ENCODE measurements at regions of chr19 and their contacts with region 1.

Region 1: GRCh38 chr19:28537079-28537478 is 675.9 kb downstream of the UQCRFS1 start:
- DNase-seq: no peak
- H3K4me3 Mint-ChIP-seq: no peak overlapping the region
- H3K27ac Mint-ChIP-seq: no peak overlapping the region
- H3K4me1 Mint-ChIP-seq: no peaks in the 10 kb centered on the region
- H3K27me3 Mint-ChIP-seq: no peaks in the 10 kb centered on the region
- CTCF ChIP-seq: no peak

Region 2: DNA sequence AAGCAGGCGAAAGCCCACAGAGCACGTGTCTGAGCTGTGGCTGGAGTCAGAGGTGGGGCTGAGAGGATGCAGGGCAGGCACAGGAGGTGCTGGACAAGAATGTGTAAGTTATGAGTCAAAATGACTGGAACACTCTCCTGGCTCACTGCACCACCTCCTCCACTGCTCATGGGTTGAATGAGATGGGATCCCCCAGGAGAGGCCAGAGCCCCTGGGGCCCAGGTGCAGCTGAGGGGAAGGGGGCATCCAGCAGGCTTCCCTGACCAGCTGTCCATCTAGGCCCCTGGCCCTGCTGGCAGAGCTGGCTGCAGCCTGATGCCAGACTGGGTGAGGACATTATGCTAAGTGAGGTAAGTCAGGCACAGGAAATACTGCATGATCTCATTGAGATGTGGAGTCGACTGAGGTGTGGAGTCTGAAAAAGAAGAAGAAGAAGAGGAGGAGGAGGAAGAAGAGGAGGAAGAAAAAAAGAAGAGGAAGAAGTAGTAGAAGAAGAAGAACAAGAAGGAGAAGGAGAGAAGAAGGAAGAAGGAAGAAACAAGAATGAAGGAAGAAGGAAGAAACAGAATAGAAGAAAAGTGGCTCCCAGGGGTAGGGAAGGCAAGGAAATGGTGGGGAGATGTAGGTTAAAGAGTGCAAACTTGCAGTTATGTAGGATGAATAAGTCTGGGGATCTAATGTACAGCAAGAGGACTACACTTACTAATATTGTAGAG is 71.5 kb before region 1 on chr19:
- CTCF ChIA-PET with region 1: no interaction called
- intact Hi-C with region 1: no loop called
- DNase-seq: peak; percentile 4
- H3K4me3 Mint-ChIP-seq: no peak overlapping the region
- H3K27ac Mint-ChIP-seq: no peak overlapping the region
- H3K4me1 Mint-ChIP-seq: peaks cover 29% of the 10 kb centered on the region
- H3K27me3 Mint-ChIP-seq: no peaks in the 10 kb centered on the region
- CTCF ChIP-seq: no peak

Region 3: GRCh38 chr19:28485292-28485691 is 51.8 kb before region 1 on chr19:
- CTCF ChIA-PET with region 1: no interaction called
- intact Hi-C with region 1: no loop called
- DNase-seq: peak; percentile 15
- H3K4me3 Mint-ChIP-seq: no peak overlapping the region
- H3K27ac Mint-ChIP-seq: no peak overlapping the region
- H3K4me1 Mint-ChIP-seq: no peaks in the 10 kb centered on the region
- H3K27me3 Mint-ChIP-seq: no peaks in the 10 kb centered on the region
- CTCF ChIP-seq: no peak

Region 4: DNA sequence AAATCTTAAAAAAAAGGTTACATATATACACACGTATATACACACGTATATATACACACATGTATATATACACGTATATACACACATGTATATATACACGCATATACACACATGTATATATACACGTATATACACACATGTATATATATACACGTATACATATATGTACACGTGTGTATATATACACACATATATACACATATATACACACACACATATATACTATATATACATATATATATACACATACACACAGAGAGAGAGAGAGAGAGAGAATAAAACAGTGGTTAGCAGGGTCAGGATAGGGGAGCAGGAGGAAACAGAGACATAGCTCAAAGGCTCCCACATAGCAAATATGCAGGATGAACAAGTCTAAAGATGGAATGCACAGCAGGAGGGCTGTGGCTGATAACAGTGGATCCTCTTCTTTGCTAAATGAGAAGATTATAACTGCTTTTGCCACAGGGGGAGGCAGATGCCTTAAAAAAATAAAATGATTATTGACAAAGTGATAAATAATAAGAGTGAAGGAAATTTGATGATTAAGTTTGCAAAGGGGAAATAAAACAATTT is 38.6 kb before region 1 on chr19:
- CTCF ChIA-PET with region 1: no interaction called
- intact Hi-C with region 1: loop called (anchors 2 kb)
- DNase-seq: no peak
- H3K4me3 Mint-ChIP-seq: no peak overlapping the region
- H3K27ac Mint-ChIP-seq: no peak overlapping the region
- H3K4me1 Mint-ChIP-seq: no peaks in the 10 kb centered on the region
- H3K27me3 Mint-ChIP-seq: peaks cover 19% of the 10 kb centered on the region
- CTCF ChIP-seq: no peak

Region 5: DNA sequence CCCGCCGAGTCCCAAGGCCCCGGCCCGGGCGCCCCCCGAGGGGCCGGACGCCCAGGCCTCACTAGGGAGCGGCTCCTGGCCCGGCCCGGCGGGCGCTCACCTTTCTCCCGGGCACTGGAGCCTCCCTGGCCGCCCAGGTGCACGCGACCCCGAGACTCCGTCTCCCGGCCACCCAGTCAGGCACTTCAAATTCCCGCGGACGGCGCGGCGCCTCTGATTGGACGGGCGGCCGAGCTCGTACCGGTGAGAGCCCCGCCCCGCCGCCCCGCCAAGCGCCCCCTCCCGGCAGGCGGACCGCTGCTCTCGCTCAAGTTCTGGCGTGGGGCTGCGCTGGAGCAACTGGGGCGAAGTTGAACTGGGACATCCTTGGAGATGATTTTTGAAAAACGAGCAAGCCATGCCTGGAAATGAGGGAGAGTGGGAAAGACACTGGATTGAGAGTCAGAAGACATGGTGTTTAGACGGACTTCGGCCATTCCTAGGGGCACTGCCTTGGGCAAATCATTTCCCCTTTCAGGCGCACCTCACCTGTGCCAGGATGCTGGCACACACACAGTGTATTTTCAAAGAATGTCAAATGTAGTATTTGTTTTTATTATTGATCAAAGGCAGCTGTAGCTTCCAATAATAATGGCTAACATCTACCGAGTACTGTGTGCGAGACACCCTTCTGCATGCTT is 190.5 kb after region 1 on chr19:
- CTCF ChIA-PET with region 1: no interaction called
- intact Hi-C with region 1: no loop called
- DNase-seq: no peak
- H3K4me3 Mint-ChIP-seq: no peak overlapping the region
- H3K27ac Mint-ChIP-seq: no peak overlapping the region
- H3K4me1 Mint-ChIP-seq: no peaks in the 10 kb centered on the region
- H3K27me3 Mint-ChIP-seq: no peaks in the 10 kb centered on the region
- CTCF ChIP-seq: no peak